OCI-LY7 (cell line): ENCODE measurements at regions of chr1 and their contacts with region 1.

Region 1: GRCh38 chr1:40849801-40850592 is 12.2 kb downstream of the CITED4 start:
- DNase-seq: peak; percentile 82
- H3K4me3 ChIP-seq: no peak overlapping the region
- H3K27ac ChIP-seq: no peak overlapping the region
- H3K4me1 ChIP-seq: peaks cover 19% of the 10 kb centered on the region
- CTCF ChIP-seq: peak; percentile 98

Region 2: DNA sequence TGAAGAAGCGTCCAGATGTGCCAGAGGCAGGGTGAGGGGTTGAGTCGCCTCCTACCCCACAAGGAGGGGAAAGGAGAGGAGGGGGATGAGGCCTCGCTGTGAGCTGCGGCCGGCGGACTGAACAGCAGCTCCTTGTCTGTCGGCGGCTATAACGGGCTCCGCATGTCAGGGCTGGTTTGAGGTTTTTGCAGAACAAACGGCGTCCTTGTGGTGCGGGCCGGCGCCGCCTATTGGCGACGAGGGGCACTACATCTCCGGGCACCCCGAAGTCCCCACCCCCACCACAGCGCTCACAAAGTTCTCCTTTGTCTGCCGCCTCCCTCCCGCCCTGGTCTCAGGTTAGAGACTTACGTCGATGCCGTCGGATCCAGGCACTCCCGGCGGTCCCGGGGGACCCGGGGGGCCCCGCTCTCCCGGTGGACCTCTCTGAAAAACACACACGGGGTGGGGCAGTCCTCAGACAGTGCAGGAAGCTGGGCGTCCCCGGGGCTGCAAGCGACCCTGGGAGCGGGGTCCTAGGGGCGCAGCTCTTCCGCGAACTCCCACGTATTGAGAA is 534.7 kb before region 1 on chr1:
- CTCF ChIA-PET with region 1: no interaction called
- POLR2A ChIA-PET with region 1: no interaction called
- intact Hi-C with region 1: no loop called
- DNase-seq: peak; percentile 93
- H3K4me3 ChIP-seq: peak overlapping the region; percentile 56
- H3K27ac ChIP-seq: peak overlapping the region; percentile 44
- H3K4me1 ChIP-seq: peaks cover 53% of the 10 kb centered on the region
- CTCF ChIP-seq: peak; percentile 87

Region 3: GRCh38 chr1:40592107-40592803 is 257.7 kb before region 1 on chr1:
- CTCF ChIA-PET with region 1: no interaction called
- POLR2A ChIA-PET with region 1: no interaction called
- intact Hi-C with region 1: loop called (anchors 5 kb)
- DNase-seq: peak; percentile 63
- H3K4me3 ChIP-seq: no peak overlapping the region
- H3K27ac ChIP-seq: no peak overlapping the region
- H3K4me1 ChIP-seq: no peaks in the 10 kb centered on the region
- CTCF ChIP-seq: peak; percentile 85